Sigmoid colon (tissue), 7 donors: ENCODE measurements at regions of chr5 and their contacts with region 1.

Region 1: GRCh38 chr5:137498736-137499505 is at the start of gene SPOCK1:
- DNase-seq: peak; percentile 83
- H3K4me3 ChIP-seq: peak within 1 kb of the TSS; percentile 56 to 74 (median 64)
- H3K27ac ChIP-seq: peak within 1 kb of the TSS in 3 of 4 donors; percentile 7 to 66 (median 60)
- H3K4me1 ChIP-seq: peaks cover 0 to 21% (median 14%) of the 10 kb centered on the region in 4 donors
- H3K27me3 ChIP-seq: no peaks in the 10 kb centered on the region
- CTCF ChIP-seq: peak in 1 of 4 experiments; percentile 71
- EP300 ChIP-seq: no peak
- POLR2A ChIP-seq: no peak
- total RNA-seq, gene SPOCK1: 33.4 to 104 (median 72.4) TPM

Region 2: DNA sequence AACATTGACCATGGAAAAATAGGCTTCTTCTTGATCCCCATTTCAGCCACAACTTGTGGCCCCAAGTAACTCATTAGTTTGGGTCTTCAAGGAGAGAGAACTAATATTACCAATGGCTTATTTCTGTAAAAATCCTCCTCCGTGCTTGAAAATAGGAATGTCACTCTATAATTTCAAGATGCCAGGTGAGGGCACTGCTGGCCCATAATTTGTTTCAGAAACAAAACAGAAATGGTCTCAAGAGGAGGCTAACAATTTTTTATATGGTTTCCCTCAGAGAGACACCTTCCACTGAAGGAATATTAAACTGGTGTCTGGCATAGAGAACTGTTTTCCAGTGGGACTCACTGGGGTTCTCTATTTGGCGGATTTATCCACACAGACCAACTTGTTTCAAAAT is 696.5 kb before region 1 on chr5:
- intact Hi-C with region 1: loop called (anchors 2 kb)
- DNase-seq: no peak
- H3K4me3 ChIP-seq: no peak overlapping the region
- H3K27ac ChIP-seq: no peak overlapping the region
- H3K4me1 ChIP-seq: no peaks in the 10 kb centered on the region
- H3K27me3 ChIP-seq: no peaks in the 10 kb centered on the region
- CTCF ChIP-seq: peak in 1 of 4 experiments; percentile 11
- EP300 ChIP-seq: no peak
- POLR2A ChIP-seq: no peak

Region 3: GRCh38 chr5:137320056-137321045 is 178.6 kb before region 1 on chr5:
- intact Hi-C with region 1: loop called (anchors 1 kb)
- DNase-seq: no peak
- H3K4me3 ChIP-seq: no peak overlapping the region
- H3K27ac ChIP-seq: peak overlapping the region in 1 of 4 donors; percentile 8
- H3K4me1 ChIP-seq: peaks cover 0 to 28% (median 14%) of the 10 kb centered on the region in 4 donors
- H3K27me3 ChIP-seq: no peaks in the 10 kb centered on the region
- CTCF ChIP-seq: peak; percentile 57 to 82 (median 76)
- EP300 ChIP-seq: no peak
- POLR2A ChIP-seq: no peak

Region 4: DNA sequence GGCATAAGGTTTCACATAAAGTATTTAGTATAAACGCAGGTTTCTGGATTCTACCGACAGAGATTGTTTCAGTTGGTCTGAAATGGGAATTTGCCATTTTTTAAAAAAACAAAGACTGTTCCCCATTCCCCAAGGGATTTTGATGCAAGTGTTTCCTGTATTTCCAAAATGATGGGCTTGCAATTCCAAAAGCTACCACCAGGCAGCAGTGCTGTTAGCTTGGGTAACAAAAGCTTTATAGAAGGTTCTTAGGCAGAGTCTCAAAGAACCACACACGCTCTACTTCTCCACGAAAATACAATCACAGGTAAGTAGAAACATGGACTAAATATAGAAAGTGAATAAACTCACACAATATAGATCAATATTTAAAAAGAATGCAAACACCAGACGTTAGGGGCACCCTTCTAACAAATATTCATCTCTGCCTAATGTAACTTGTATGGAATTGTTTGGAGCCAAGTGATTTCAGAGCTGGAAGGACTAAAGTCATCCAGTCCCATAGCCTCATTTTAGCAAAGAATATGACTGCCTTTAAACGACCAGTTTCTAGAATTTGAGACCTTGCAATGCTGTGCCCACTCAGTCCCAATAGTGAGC is 154.1 kb before region 1 on chr5:
- intact Hi-C with region 1: loop called (anchors 1 kb)
- DNase-seq: peak; percentile 70
- H3K4me3 ChIP-seq: no peak overlapping the region
- H3K27ac ChIP-seq: no peak overlapping the region
- H3K4me1 ChIP-seq: peaks cover 0 to 13% (median 9%) of the 10 kb centered on the region in 4 donors
- H3K27me3 ChIP-seq: no peaks in the 10 kb centered on the region
- CTCF ChIP-seq: peak; percentile 63 to 89 (median 82)
- EP300 ChIP-seq: no peak
- POLR2A ChIP-seq: no peak

Region 5: GRCh38 chr5:137453485-137454080 is 45.3 kb before region 1 on chr5:
- intact Hi-C with region 1: no loop called
- DNase-seq: no peak
- H3K4me3 ChIP-seq: no peak overlapping the region
- H3K27ac ChIP-seq: no peak overlapping the region
- H3K4me1 ChIP-seq: no peaks in the 10 kb centered on the region
- H3K27me3 ChIP-seq: no peaks in the 10 kb centered on the region
- CTCF ChIP-seq: no peak
- EP300 ChIP-seq: no peak
- POLR2A ChIP-seq: no peak

Region 6: GRCh38 chr5:137563646-137564397 is 64.9 kb after region 1 on chr5:
- intact Hi-C with region 1: no loop called
- DNase-seq: no peak
- H3K4me3 ChIP-seq: no peak overlapping the region
- H3K27ac ChIP-seq: no peak overlapping the region
- H3K4me1 ChIP-seq: no peaks in the 10 kb centered on the region
- H3K27me3 ChIP-seq: no peaks in the 10 kb centered on the region
- CTCF ChIP-seq: no peak
- EP300 ChIP-seq: no peak
- POLR2A ChIP-seq: no peak